ENCODE measurements at regions of chrX and their contacts with region 1.

Region 1: DNA sequence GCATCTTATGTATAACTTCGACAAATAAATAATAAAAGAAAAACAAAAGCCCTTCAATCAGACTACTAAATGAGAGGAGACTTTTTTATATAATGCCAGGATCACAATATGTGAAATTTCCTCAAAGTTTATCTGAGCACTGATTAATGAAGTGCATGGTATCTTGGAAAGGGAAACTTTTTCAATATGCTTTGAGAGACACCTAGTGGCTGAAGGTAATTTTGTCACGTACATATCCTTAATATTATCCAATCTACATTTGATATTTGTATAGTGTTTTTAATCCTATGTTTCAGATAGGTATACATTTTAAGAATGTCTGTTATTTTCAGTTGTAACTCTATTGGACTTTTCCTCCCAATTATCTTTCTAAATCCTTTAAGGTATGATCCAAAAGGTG is 146.8 kb downstream of the KLHL4 start:
- DNase-seq: peak in 1 of 2 experiments; percentile 36
- H3K4me3 ChIP-seq: no peak overlapping the region
- H3K4me1 ChIP-seq: no peaks in the 10 kb centered on the region; the same call in 1 of the 2 replicates
- H3K27me3 ChIP-seq: no peaks in the 10 kb centered on the region

Region 2: GRCh38 chrX:87284704-87285103 is 379.7 kb before region 1 on chrX:
- in situ Hi-C with region 1: no loop called
- DNase-seq: no peak
- H3K4me3 ChIP-seq: no peak overlapping the region
- H3K4me1 ChIP-seq: no peaks in the 10 kb centered on the region
- H3K27me3 ChIP-seq: no peaks in the 10 kb centered on the region

Region 3: GRCh38 chrX:87338510-87338909 is 325.9 kb before region 1 on chrX:
- in situ Hi-C with region 1: loop called (anchors 25 kb)
- DNase-seq: peak in 1 of 2 experiments; percentile 72
- H3K4me3 ChIP-seq: no peak overlapping the region
- H3K4me1 ChIP-seq: peaks cover 28% of the 10 kb centered on the region
- H3K27me3 ChIP-seq: no peaks in the 10 kb centered on the region

Region 4: GRCh38 chrX:87788976-87789375 is 124.6 kb after region 1 on chrX:
- in situ Hi-C with region 1: no loop called
- DNase-seq: no peak
- H3K4me3 ChIP-seq: no peak overlapping the region
- H3K4me1 ChIP-seq: no peaks in the 10 kb centered on the region
- H3K27me3 ChIP-seq: no peaks in the 10 kb centered on the region

Measured in HAP-1 (cell line).